Adrenal gland (tissue), 19 donors: ENCODE measurements at regions of chr2 and their contacts with region 1.

Region 1: GRCh38 chr2:109545828-109546713 is 67.7 kb downstream of the SEPTIN10 start:
- DNase-seq: peak; percentile 40 to 85 (median 65)
- H3K4me3 ChIP-seq: no peak overlapping the region
- H3K27ac ChIP-seq: no peak overlapping the region
- H3K4me1 ChIP-seq: no peaks in the 10 kb centered on the region
- H3K27me3 ChIP-seq: no peaks in the 10 kb centered on the region
- CTCF ChIP-seq: peak; percentile 87 to 98 (median 96)
- POLR2A ChIP-seq: no peak

Region 2: DNA sequence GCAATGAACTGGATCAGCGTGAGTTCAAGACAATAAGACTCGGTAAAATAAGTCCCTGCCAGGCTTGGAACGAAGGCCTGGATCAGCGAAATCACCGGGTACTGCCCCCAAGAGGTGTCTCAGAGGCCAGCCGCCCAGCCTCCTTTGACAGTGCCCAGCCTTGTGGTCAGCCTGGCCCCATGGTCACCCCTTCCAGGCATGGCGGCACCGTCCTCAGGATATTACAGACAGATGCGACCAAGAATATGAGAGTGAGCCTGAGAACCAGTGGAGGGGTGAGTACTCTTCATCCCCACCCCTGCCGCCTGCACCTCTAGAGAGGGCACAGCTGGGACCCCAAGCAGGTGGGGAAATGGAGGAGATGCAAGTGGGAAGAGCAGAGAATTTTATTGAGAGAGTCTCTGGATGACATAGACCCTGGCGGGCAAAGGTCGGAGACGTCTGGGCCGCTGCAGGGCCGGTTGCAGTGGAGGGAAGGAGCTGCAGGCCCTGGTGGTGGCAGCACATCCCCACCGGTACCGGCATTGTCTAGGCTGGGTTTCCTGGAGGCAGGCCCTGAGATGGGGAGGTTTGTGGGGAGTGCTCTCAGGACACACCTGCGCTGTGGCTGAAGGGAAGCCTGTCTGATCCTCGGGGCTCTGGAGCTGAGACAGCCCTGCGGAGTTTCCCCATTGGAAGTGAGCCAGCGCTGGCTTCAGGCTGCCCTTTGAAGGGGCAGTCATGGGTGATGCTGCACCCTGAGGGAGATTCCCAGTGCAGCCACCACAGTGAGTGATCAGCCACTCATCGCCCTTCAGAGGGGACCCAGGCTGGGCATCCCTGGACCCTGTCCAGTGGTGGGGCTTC is 122.3 kb before region 1 on chr2:
- intact Hi-C with region 1: no loop called
- DNase-seq: no peak
- H3K4me3 ChIP-seq: no peak overlapping the region
- H3K27ac ChIP-seq: no peak overlapping the region
- H3K4me1 ChIP-seq: peaks cover 0 to 6% of the 10 kb centered on the region in 2 donors
- H3K27me3 ChIP-seq: no peaks in the 10 kb centered on the region
- CTCF ChIP-seq: no peak
- POLR2A ChIP-seq: no peak

Region 3: GRCh38 chr2:109715313-109715805 is 169.3 kb after region 1 on chr2:
- intact Hi-C with region 1: loop called (anchors 5 to 10 kb)
- DNase-seq: peak in 6 of 7 donors; percentile 45 to 71 (median 60)
- H3K4me3 ChIP-seq: no peak overlapping the region
- H3K27ac ChIP-seq: no peak overlapping the region
- H3K4me1 ChIP-seq: no peaks in the 10 kb centered on the region
- H3K27me3 ChIP-seq: no peaks in the 10 kb centered on the region
- CTCF ChIP-seq: peak; percentile 31 to 77 (median 62)
- POLR2A ChIP-seq: no peak

Region 4: DNA sequence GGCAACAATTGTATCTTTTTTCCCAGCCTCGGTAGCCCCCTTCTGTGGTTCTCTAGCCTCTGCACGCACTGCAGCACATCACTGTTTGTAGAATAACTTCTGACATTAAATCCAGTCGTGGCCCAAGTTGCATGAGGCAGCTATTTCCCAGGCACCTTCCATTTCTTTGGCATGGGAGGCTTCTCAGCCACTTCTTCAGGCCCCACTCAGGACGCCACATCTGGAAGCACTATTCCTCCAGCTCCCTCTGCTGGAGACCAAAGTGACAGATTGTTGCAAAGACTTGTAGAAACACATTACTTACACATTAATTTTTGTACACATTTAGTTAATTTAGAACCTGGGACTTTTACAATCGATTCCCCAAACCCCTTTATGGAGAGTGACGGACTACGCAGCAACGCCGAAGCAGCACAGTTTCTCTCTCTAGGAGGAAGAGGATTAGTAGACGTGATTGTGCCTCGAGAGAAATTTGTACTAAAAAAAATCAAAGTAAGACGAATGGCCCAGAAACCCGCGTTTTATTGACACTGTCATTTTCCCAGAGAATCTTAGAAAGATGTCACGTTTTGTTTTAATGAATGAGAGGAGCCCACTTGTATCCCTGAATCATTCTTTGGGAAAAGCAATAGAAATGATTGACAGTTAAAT is 190.2 kb after region 1 on chr2:
- intact Hi-C with region 1: loop called in 1 of 2 experiments (anchors 5 kb)
- DNase-seq: peak; percentile 46 to 84 (median 57)
- H3K4me3 ChIP-seq: no peak overlapping the region
- H3K27ac ChIP-seq: no peak overlapping the region
- H3K4me1 ChIP-seq: no peaks in the 10 kb centered on the region
- H3K27me3 ChIP-seq: no peaks in the 10 kb centered on the region
- CTCF ChIP-seq: peak; percentile 53 to 76 (median 67)
- POLR2A ChIP-seq: no peak